Mammary epithelial cell (primary cell): ENCODE measurements at regions of chr16 and their contacts with region 1.

Region 1: DNA sequence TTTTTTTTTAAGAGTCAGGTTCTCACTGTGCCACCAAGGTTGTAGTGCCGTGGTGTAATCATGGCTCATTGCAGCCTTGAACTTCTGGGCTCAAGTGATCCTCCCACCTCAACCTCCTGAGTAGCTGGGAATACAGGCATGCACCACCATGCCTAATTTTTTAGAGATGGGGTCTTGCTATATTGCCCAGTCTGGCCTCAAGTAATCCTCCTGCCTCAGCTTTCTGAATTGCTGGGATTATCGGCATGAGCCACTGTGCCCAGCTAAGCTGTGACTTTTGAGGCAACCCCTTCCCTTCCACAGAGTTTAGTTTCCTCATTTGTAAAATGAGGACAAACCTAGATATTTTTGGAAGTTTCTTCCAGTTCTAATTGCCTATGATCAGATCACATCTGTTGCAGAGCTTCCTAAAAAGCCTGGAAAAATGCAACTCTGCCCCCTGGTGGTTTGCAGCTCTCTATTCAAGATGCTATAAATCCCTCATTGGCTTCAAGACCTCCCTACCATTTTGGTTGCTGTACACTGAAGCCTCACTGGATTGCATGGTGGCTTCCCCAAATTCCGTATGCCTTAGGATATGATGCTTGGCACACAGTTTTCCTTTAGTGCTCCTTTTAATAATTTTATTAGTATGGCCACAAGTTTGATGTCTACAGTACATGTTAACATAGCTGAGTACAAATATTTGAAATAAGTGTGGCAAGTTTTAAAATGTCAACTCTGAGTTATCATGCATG is 19.3 kb downstream of the GDE1 start:
- DNase-seq: peak; percentile 51
- H3K4me3 ChIP-seq: no peak overlapping the region
- H3K27ac ChIP-seq: no peak overlapping the region
- H3K4me1 ChIP-seq: peaks cover 3% of the 10 kb centered on the region
- H3K27me3 ChIP-seq: no peaks in the 10 kb centered on the region
- CTCF ChIP-seq: peak; percentile 81 to 86

Region 2: DNA sequence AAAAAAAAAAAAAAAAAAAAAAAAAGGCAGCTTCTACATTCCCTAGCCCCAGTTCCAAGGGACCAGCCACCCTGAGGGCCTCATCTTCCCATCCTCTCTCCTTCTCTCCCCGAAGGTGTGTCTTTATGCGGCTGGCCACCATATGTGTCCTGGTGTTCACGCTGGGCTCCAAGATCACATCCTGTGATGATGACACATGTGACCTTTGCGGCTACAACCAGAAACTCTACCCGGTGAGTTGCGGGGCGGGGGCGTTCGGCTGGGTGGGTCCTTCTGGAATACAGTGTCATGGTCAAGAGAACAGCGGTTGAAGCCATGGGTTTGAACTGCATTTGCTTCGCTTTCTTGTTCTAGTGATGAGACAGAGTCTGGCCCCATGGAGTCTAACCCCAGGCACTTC is 457.8 kb before region 1 on chr16:
- CTCF ChIA-PET with region 1: no interaction called
- dilution Hi-C with region 1: no loop called
- in situ Hi-C with region 1: no loop called
- intact Hi-C with region 1: no loop called
- DNase-seq: no peak
- H3K4me3 ChIP-seq: no peak overlapping the region
- H3K27ac ChIP-seq: no peak overlapping the region
- H3K4me1 ChIP-seq: no peaks in the 10 kb centered on the region
- H3K27me3 ChIP-seq: no peaks in the 10 kb centered on the region
- CTCF ChIP-seq: no peak

Region 3: DNA sequence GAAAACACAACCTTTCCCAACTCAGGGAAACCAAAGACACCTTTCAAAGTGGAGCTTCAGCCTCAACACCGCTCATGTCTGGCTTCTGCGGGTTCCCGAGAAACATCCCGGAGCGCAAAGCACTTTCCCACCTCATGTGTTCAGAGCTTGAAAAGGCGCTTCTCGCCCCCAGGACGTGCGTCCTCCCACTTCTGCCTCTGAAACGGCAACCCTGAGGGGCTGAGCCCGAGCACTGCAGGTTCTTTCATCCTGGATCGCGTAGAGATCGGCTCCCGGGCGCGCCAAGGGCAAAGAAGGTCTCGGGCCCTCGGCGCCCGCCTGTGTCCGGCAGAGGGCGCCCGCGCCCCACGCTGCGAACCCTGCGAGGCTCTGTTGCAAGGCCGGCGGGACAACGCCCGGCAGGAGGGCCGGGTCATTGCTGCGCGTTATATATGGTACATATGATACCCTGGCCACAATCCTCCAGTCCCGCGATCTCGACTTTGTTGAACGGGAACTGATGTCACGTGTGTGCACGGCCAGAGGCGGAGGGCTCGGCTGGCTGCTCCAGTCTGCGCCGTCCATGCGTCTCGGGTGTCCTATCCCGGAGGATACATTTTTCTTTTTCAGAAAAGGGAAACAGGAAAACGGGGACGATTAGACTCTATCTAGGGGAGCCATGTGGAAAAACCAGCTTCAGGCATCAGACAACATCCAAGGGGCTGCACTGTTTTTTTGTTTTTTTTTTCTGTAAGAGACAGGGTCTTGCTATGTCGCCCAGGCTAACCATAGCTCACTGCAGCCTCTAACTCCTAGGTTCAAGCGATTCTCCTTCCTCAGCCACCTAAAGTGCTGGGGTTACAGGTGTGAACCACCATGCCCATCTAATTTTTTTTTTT is 416.0 kb before region 1 on chr16:
- CTCF ChIA-PET with region 1: no interaction called
- dilution Hi-C with region 1: no loop called
- in situ Hi-C with region 1: loop called (anchors 5 to 25 kb)
- intact Hi-C with region 1: loop called (anchors 5 kb)
- DNase-seq: peak; percentile 74
- H3K4me3 ChIP-seq: peak overlapping the region; percentile 28 to 48 (median 34)
- H3K27ac ChIP-seq: no peak overlapping the region
- H3K4me1 ChIP-seq: peaks cover 12% of the 10 kb centered on the region
- H3K27me3 ChIP-seq: no peaks in the 10 kb centered on the region
- CTCF ChIP-seq: peak; percentile 73 to 99

Region 4: DNA sequence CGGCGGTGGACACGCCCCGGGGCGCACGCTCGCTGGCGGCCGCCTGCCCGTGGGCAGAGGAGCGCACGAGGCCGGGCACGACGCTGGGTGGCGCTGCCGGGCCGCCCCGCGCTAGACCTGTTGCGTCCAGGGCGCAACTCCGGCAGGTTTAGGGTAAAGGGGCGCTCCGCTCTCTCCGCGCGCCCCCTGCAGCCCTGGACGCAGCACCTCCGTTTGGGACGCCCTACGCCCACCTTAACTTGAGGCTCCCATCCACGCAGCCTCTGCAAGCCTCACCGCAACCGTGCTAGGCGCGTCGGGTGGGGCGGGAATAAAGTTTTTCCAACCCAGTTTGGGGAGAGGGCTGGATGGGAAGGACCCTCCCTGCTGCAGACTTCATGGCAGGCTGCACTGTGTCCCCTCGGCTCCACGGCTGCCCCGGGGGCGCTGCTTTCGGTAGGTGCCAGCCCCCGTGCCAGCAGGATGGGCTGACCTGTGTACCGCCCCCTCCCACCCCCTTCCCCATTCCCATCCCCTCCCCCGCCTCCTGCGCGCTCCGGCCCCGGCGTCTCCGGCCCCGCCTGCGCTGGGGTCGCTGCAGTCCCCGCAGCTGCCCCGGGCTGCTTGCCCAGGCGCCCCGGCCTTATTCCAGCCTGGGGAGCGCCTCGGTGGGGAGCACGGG is 334.7 kb before region 1 on chr16 and contains the start of gene SYT17:
- CTCF ChIA-PET with region 1: no interaction called
- dilution Hi-C with region 1: no loop called
- in situ Hi-C with region 1: no loop called
- intact Hi-C with region 1: loop called (anchors 5 kb)
- DNase-seq: peak; percentile 39
- H3K4me3 ChIP-seq: peak within 1 kb of the TSS in 2 of 3 experiments; percentile 37 to 40
- H3K27ac ChIP-seq: no peak within 1 kb of the TSS
- H3K4me1 ChIP-seq: peaks cover 17% of the 10 kb centered on the region
- H3K27me3 ChIP-seq: peaks cover 12% of the 10 kb centered on the region
- CTCF ChIP-seq: peak; percentile 42 to 56
- total RNA-seq, gene SYT17: 0.17 to 0.24 TPM

Region 5: GRCh38 chr16:19223235-19224170 is 279.1 kb before region 1 on chr16:
- CTCF ChIA-PET with region 1: no interaction called
- dilution Hi-C with region 1: no loop called
- in situ Hi-C with region 1: no loop called
- intact Hi-C with region 1: loop called (anchors 10 kb)
- DNase-seq: peak; percentile 16
- H3K4me3 ChIP-seq: no peak overlapping the region
- H3K27ac ChIP-seq: no peak overlapping the region
- H3K4me1 ChIP-seq: no peaks in the 10 kb centered on the region
- H3K27me3 ChIP-seq: no peaks in the 10 kb centered on the region
- CTCF ChIP-seq: peak; percentile 59 to 73

Region 6: DNA sequence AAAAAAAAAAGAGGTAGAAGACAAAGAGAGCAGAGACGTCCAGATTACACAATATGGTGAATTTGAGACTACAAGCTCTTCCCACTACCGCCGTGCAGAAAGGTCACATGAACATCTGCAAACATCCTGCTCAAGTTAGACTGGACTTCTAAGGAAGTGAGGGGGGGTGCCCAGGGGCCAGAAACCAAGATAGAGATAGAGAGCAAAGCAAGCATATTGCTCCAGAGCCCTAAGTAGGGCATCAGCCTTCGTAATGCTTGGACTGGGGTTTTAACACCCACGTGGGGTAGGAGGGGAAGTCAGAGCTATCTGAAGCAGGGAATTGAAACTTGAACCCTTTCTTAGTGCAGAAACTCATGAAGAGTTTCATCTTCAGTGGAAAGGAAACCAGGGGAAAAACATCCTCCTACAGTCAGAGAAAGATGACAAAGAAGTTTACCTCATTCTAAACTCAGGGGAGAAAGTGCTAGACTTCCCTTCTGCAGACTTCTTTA is 208.4 kb before region 1 on chr16:
- CTCF ChIA-PET with region 1: interaction called, 10 read pairs
- dilution Hi-C with region 1: no loop called
- in situ Hi-C with region 1: no loop called
- intact Hi-C with region 1: no loop called
- DNase-seq: no peak
- H3K4me3 ChIP-seq: no peak overlapping the region
- H3K27ac ChIP-seq: no peak overlapping the region
- H3K4me1 ChIP-seq: no peaks in the 10 kb centered on the region
- H3K27me3 ChIP-seq: peaks cover under 1% of the 10 kb centered on the region
- CTCF ChIP-seq: no peak

Region 7: GRCh38 chr16:19389246-19389645 is 113.3 kb before region 1 on chr16:
- CTCF ChIA-PET with region 1: interaction called, 4 read pairs
- dilution Hi-C with region 1: no loop called
- in situ Hi-C with region 1: loop called (anchors 5 kb)
- intact Hi-C with region 1: loop called (anchors 1 kb)
- DNase-seq: peak; percentile 44
- H3K4me3 ChIP-seq: no peak overlapping the region
- H3K27ac ChIP-seq: no peak overlapping the region
- H3K4me1 ChIP-seq: peaks cover 20% of the 10 kb centered on the region
- H3K27me3 ChIP-seq: no peaks in the 10 kb centered on the region
- CTCF ChIP-seq: peak; percentile 63 to 90

Region 8: GRCh38 chr16:19645557-19645981 is 143.0 kb after region 1 on chr16:
- CTCF ChIA-PET with region 1: no interaction called
- dilution Hi-C with region 1: no loop called
- in situ Hi-C with region 1: no loop called
- intact Hi-C with region 1: no loop called
- DNase-seq: no peak
- H3K4me3 ChIP-seq: no peak overlapping the region
- H3K27ac ChIP-seq: no peak overlapping the region
- H3K4me1 ChIP-seq: no peaks in the 10 kb centered on the region
- H3K27me3 ChIP-seq: no peaks in the 10 kb centered on the region
- CTCF ChIP-seq: no peak